ENCODE measurements at regions of chr11 and their contacts with region 1.

Region 1: GRCh38 chr11:3109921-3110706 is 52.9 kb upstream of the CARS1 start:
- DNase-seq: no peak
- H3K4me3 ChIP-seq: no peak overlapping the region
- H3K27ac ChIP-seq: peak overlapping the region; percentile 34
- H3K4me1 ChIP-seq: peaks cover 15% of the 10 kb centered on the region
- H3K27me3 ChIP-seq: no peaks in the 10 kb centered on the region
- CTCF ChIP-seq: peak in 1 of 3 experiments; percentile 40
- POLR2A ChIP-seq: no peak

Region 2: GRCh38 chr11:2992234-2992996 is 117.7 kb before region 1 on chr11 and contains the start of gene NAP1L4:
- intact Hi-C with region 1: no loop called
- DNase-seq: peak; percentile 94 to 96
- H3K4me3 ChIP-seq: peak within 1 kb of the TSS; percentile 75 to 95
- H3K27ac ChIP-seq: peak within 1 kb of the TSS; percentile 86
- H3K4me1 ChIP-seq: peaks cover 46% of the 10 kb centered on the region
- H3K27me3 ChIP-seq: no peaks in the 10 kb centered on the region
- CTCF ChIP-seq: no peak
- POLR2A ChIP-seq: peak in 1 of 2 donors; percentile 72
- total RNA-seq, gene NAP1L4: 108 TPM

Region 3: GRCh38 chr11:3087821-3088800 is 22.0 kb before region 1 on chr11:
- intact Hi-C with region 1: no loop called
- DNase-seq: no peak
- H3K4me3 ChIP-seq: no peak overlapping the region
- H3K27ac ChIP-seq: no peak overlapping the region
- H3K4me1 ChIP-seq: peaks cover 9% of the 10 kb centered on the region
- H3K27me3 ChIP-seq: no peaks in the 10 kb centered on the region
- CTCF ChIP-seq: no peak
- POLR2A ChIP-seq: no peak

Region 4: GRCh38 chr11:3160252-3161031 is 50.3 kb after region 1 on chr11:
- intact Hi-C with region 1: loop called (anchors 5 kb)
- DNase-seq: peak in 1 of 2 donors; percentile 96
- H3K4me3 ChIP-seq: peak overlapping the region; percentile 56 to 63
- H3K27ac ChIP-seq: peak overlapping the region; percentile 85
- H3K4me1 ChIP-seq: peaks cover 93% of the 10 kb centered on the region
- H3K27me3 ChIP-seq: no peaks in the 10 kb centered on the region
- CTCF ChIP-seq: no peak
- POLR2A ChIP-seq: peak in 1 of 2 donors; percentile 5

Region 5: GRCh38 chr11:3217676-3218482 is 107.8 kb after region 1 on chr11:
- intact Hi-C with region 1: loop called (anchors 10 kb)
- DNase-seq: no peak
- H3K4me3 ChIP-seq: no peak overlapping the region
- H3K27ac ChIP-seq: no peak overlapping the region
- H3K4me1 ChIP-seq: peaks cover 16% of the 10 kb centered on the region
- H3K27me3 ChIP-seq: no peaks in the 10 kb centered on the region
- CTCF ChIP-seq: no peak
- POLR2A ChIP-seq: no peak

Measured in vagina (tissue), 2 donors.